Ovary (tissue), 10 donors: ENCODE measurements at regions of chr3 and their contacts with region 1.

Region 1: GRCh38 chr3:71875461-71875947 is 90.6 kb upstream of the PROK2 start:
- DNase-seq: peak; percentile 53 to 81 (median 67)
- H3K4me3 ChIP-seq: no peak overlapping the region
- H3K27ac ChIP-seq: no peak overlapping the region
- H3K4me1 ChIP-seq: peaks cover 4% of the 10 kb centered on the region
- H3K27me3 ChIP-seq: no peaks in the 10 kb centered on the region
- CTCF ChIP-seq: peak; percentile 33 to 64 (median 39)
- EP300 ChIP-seq: no peak
- POLR2A ChIP-seq: no peak

Region 2: GRCh38 chr3:72829701-72830100 is 954.2 kb after region 1 on chr3:
- intact Hi-C with region 1: loop called in 2 of 4 experiments (anchors 5 kb)
- DNase-seq: no peak
- H3K4me3 ChIP-seq: no peak overlapping the region
- H3K27ac ChIP-seq: no peak overlapping the region
- H3K4me1 ChIP-seq: no peaks in the 10 kb centered on the region
- H3K27me3 ChIP-seq: no peaks in the 10 kb centered on the region
- CTCF ChIP-seq: no peak
- EP300 ChIP-seq: no peak
- POLR2A ChIP-seq: no peak